SK-N-SH (cell line): ENCODE measurements at regions of chr10 and their contacts with region 1.

Region 1: GRCh38 chr10:122142641-122143237 is 128.4 kb upstream of the BTBD16 start:
- DNase-seq: peak; percentile 73
- H3K4me3 ChIP-seq: no peak overlapping the region; a peak in 1 of 4 replicates
- H3K27ac ChIP-seq: peak overlapping the region; percentile 95 to 100
- H3K4me1 ChIP-seq: peaks cover 33 to 65% of the 10 kb centered on the region in 2 experiments
- H3K27me3 ChIP-seq: no peaks in the 10 kb centered on the region
- CTCF ChIP-seq: peak; percentile 77
- EP300 ChIP-seq: no peak
- RAD21 ChIP-seq: peak; percentile 78

Region 2: GRCh38 chr10:121927841-121928527 is 214.8 kb before region 1 on chr10 and contains the start of gene ATE1:
- CTCF ChIA-PET with region 1: no interaction called
- POLR2A ChIA-PET with region 1: interaction called, 11 read pairs
- DNase-seq: peak; percentile 94
- H3K4me3 ChIP-seq: peak within 1 kb of the TSS; percentile 76 to 92
- H3K27ac ChIP-seq: peak within 1 kb of the TSS; percentile 88 to 98
- H3K4me1 ChIP-seq: peaks cover 0 to 7% of the 10 kb centered on the region in 2 experiments; a peak in 2 of 4 replicates
- H3K27me3 ChIP-seq: no peaks in the 10 kb centered on the region
- CTCF ChIP-seq: no peak
- EP300 ChIP-seq: no peak
- RAD21 ChIP-seq: no peak; the same call in 1 of the 2 replicates
- polyA plus RNA-seq, gene ATE1: 6.3 and 7.2 TPM in 2 replicates

Region 3: DNA sequence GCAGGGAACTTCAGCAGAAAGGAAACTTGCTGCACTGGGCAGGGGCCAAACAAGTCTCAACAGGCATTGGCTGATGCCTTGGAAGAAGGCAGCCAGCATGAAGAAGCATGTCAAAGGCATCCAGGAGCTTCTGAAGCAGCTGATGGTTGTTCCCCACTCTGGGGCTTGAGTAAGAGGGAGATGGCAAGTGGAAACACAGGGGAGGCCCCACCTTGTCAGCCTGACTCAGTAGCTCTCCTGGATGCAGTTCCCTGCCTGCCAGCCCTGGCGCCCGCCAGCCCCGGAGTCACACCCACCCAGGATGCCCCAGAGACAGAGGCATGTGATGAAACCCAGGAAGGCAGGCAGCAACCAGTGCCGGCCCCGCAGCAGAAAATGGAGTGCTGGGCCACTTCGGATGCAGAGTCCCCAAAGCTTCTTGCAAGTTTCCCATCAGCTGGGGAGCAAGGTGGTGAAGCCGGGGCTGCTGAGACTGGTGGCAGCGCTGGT is 57.3 kb before region 1 on chr10:
- CTCF ChIA-PET with region 1: no interaction called
- POLR2A ChIA-PET with region 1: no interaction called
- DNase-seq: no peak
- H3K4me3 ChIP-seq: no peak overlapping the region
- H3K27ac ChIP-seq: no peak overlapping the region
- H3K4me1 ChIP-seq: peaks cover 0 to 6% of the 10 kb centered on the region in 2 experiments; a peak in 1 of 4 replicates
- H3K27me3 ChIP-seq: no peaks in the 10 kb centered on the region
- CTCF ChIP-seq: no peak
- EP300 ChIP-seq: no peak
- RAD21 ChIP-seq: no peak

Region 4: DNA sequence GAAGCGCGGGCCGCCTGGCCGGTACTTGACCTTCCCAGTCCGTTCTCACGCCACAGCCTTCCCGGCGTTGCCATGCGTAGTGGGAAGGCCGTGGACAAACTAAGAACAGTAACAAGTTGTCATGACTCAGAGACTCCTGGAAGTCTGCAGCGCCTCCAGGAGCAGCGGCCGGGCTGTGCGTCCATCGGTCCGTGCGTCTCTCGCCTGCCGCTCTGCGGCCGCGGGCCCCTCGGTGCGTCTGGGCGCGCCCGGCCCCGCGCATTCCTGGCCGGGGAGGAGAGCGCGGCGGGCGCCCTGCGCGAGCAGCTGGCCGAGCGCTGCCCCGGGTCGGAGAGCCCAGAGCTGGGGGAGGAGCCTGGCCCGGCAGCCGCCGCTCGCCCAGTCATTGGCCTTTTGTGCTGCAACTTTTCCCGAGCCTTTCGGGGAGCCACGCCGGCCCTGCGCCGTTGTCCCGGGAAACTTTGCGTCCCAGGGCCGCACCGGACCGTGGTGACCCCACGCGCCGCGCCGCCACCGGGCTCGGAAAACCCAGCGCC is 30.0 kb before region 1 on chr10:
- CTCF ChIA-PET with region 1: interaction called, 13 read pairs
- POLR2A ChIA-PET with region 1: interaction called, 25 read pairs
- DNase-seq: peak; percentile 93
- H3K4me3 ChIP-seq: peak overlapping the region; percentile 81 to 82
- H3K27ac ChIP-seq: peak overlapping the region; percentile 75 to 79
- H3K4me1 ChIP-seq: peaks cover 6 to 31% of the 10 kb centered on the region in 2 experiments; a peak in 2 of 4 replicates
- H3K27me3 ChIP-seq: no peaks in the 10 kb centered on the region
- CTCF ChIP-seq: peak; percentile 24
- EP300 ChIP-seq: no peak
- RAD21 ChIP-seq: peak; percentile 55

Region 5: GRCh38 chr10:122163174-122164022 is 20.7 kb after region 1 on chr10:
- CTCF ChIA-PET with region 1: interaction called, 111 read pairs
- POLR2A ChIA-PET with region 1: interaction called, 90 read pairs
- DNase-seq: peak; percentile 83
- H3K4me3 ChIP-seq: peak overlapping the region; percentile 74 to 75
- H3K27ac ChIP-seq: peak overlapping the region in 1 of 2 experiments; percentile 91; a peak in 2 of 4 replicates
- H3K4me1 ChIP-seq: peaks cover 0 to 50% of the 10 kb centered on the region in 2 experiments; a peak in 2 of 4 replicates
- H3K27me3 ChIP-seq: no peaks in the 10 kb centered on the region
- CTCF ChIP-seq: no peak
- EP300 ChIP-seq: no peak
- RAD21 ChIP-seq: no peak

Region 6: GRCh38 chr10:122232769-122233168 is 90.0 kb after region 1 on chr10:
- CTCF ChIA-PET with region 1: interaction called, 12 read pairs
- POLR2A ChIA-PET with region 1: interaction called, 5 read pairs
- DNase-seq: no peak
- H3K4me3 ChIP-seq: no peak overlapping the region
- H3K27ac ChIP-seq: peak overlapping the region; percentile 18 to 98; a peak in 2 of 4 replicates
- H3K4me1 ChIP-seq: peaks cover 0 to 71% of the 10 kb centered on the region in 2 experiments; a peak in 2 of 4 replicates
- H3K27me3 ChIP-seq: no peaks in the 10 kb centered on the region
- CTCF ChIP-seq: no peak
- EP300 ChIP-seq: no peak
- RAD21 ChIP-seq: no peak